AG04449 (cell line): ENCODE measurements at regions of chr21 and their contacts with region 1.

Region 1: GRCh38 chr21:45973659-45974072 is 7.9 kb upstream of the COL6A1 start:
- DNase-seq: no peak
- H3K4me3 ChIP-seq: peak overlapping the region; percentile 44
- CTCF ChIP-seq: peak; percentile 86

Region 2: GRCh38 chr21:45963232-45963570 is 10.5 kb before region 1 on chr21:
- CTCF ChIA-PET with region 1: interaction called, 22 read pairs
- POLR2A ChIA-PET with region 1: no interaction called
- DNase-seq: no peak
- H3K4me3 ChIP-seq: no peak overlapping the region
- CTCF ChIP-seq: no peak

Region 3: GRCh38 chr21:46092026-46092764 is 118.5 kb after region 1 on chr21:
- CTCF ChIA-PET with region 1: interaction called, 63 read pairs
- POLR2A ChIA-PET with region 1: interaction called, 16 read pairs
- DNase-seq: peak; percentile 95
- H3K4me3 ChIP-seq: peak overlapping the region; percentile 45
- CTCF ChIP-seq: no peak

Region 4: GRCh38 chr21:46104104-46104503 is 130.4 kb after region 1 on chr21:
- CTCF ChIA-PET with region 1: interaction called, 63 read pairs
- POLR2A ChIA-PET with region 1: interaction called, 26 read pairs
- DNase-seq: no peak
- H3K4me3 ChIP-seq: no peak overlapping the region
- CTCF ChIP-seq: no peak

Region 5: GRCh38 chr21:46128106-46128860 is 154.6 kb after region 1 on chr21:
- CTCF ChIA-PET with region 1: interaction called, 17 read pairs
- POLR2A ChIA-PET with region 1: interaction called, 7 read pairs
- DNase-seq: no peak
- H3K4me3 ChIP-seq: no peak overlapping the region
- CTCF ChIP-seq: no peak

Region 6: DNA sequence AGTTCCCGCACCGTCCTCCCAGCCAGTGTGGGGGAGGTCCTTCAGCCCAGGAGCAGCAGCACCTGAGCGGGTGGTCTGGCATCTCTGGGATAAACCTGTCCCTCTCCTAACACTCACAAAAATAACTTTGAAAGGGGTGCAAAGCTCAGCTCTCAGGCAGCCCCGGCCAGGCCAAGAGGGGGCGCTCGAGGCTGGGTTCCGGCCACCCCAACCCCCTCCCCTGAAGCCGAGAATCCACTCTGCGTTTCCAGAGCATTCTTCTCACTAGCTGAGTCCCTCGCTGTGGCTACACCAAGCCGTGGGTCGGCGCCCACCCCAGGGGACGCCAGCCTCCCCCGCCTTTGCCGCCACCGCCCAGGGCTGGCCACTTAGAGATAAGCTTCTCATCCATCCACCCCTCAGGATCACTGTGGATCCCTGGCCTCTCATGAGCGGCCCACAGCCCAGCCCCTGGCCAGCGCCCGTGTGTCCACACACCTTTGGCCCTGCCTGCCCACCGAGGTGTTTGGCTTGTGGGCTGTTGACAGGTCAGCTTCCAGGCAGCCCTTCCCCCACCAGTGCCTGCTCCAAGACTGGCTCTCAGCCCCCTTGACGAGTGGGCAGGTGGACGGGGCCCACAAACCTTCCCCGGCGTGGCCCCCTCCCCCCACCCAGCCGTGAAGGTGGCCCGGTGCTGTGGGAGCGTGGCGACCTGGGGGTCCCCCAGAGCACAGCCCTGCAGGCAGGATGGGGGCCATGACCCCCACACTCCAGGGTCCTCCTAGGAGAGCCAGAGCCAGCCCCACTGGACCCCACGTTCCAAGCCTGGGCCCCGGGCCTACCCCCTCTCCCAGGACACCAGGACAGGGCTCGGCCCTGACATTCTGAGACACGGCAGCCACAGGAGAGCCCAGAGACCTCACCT is 179.8 kb after region 1 on chr21:
- CTCF ChIA-PET with region 1: interaction called, 14 read pairs
- POLR2A ChIA-PET with region 1: no interaction called
- DNase-seq: no peak
- H3K4me3 ChIP-seq: no peak overlapping the region
- CTCF ChIP-seq: peak; percentile 84